SK-N-SH (cell line): ENCODE measurements at regions of chr11 and their contacts with region 1.

Region 1: GRCh38 chr11:120303004-120303637 is 22.0 kb upstream of the TLCD5 start:
- DNase-seq: peak; percentile 62
- H3K4me3 ChIP-seq: peak overlapping the region in 1 of 2 experiments; percentile 47; a peak in 1 of 4 replicates
- H3K27ac ChIP-seq: no peak overlapping the region
- H3K4me1 ChIP-seq: peaks cover 6 to 7% of the 10 kb centered on the region in 2 experiments; a peak in 1 of 4 replicates
- H3K27me3 ChIP-seq: peaks cover 3% of the 10 kb centered on the region; the same call in 1 of the 2 replicates
- CTCF ChIP-seq: peak; percentile 71
- EP300 ChIP-seq: no peak
- RAD21 ChIP-seq: peak; percentile 70

Region 2: GRCh38 chr11:120182790-120183491 is 120.2 kb before region 1 on chr11:
- CTCF ChIA-PET with region 1: interaction called, 33 read pairs
- POLR2A ChIA-PET with region 1: no interaction called
- DNase-seq: no peak
- H3K4me3 ChIP-seq: no peak overlapping the region
- H3K27ac ChIP-seq: no peak overlapping the region
- H3K4me1 ChIP-seq: peaks cover 5 to 51% of the 10 kb centered on the region in 2 experiments; a peak in 2 of 4 replicates
- H3K27me3 ChIP-seq: no peaks in the 10 kb centered on the region
- CTCF ChIP-seq: peak; percentile 42
- EP300 ChIP-seq: no peak
- RAD21 ChIP-seq: peak; percentile 42

Region 3: GRCh38 chr11:120235024-120235861 is 67.9 kb before region 1 on chr11:
- CTCF ChIA-PET with region 1: interaction called, 622 read pairs
- POLR2A ChIA-PET with region 1: interaction called, 6 read pairs
- DNase-seq: peak; percentile 78
- H3K4me3 ChIP-seq: no peak overlapping the region; a peak in 1 of 4 replicates
- H3K27ac ChIP-seq: no peak overlapping the region
- H3K4me1 ChIP-seq: peaks cover 0 to 5% of the 10 kb centered on the region in 2 experiments; a peak in 1 of 4 replicates
- H3K27me3 ChIP-seq: peaks cover 7% of the 10 kb centered on the region; the same call in 1 of the 2 replicates
- CTCF ChIP-seq: peak; percentile 73
- EP300 ChIP-seq: no peak
- RAD21 ChIP-seq: peak; percentile 84

Region 4: DNA sequence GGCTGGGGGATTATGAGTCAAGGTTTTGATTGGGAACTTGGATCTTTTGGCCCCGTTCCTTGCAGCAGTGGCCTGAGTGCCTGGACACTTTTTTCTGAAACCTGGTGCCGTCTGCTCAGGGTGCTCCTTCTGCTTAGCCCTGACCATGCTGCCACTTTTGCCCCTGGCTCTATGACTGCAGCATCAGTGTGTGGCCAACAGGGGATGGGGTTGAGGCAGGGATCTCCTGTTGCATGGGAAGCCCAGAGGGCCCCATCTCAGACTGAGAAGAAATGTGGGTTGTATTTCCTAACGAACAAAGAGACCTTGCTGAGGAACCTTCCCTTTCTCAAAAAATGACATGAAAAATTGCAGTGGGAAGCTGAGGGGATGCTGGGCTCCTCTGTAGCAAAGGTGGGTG is 44.5 kb before region 1 on chr11:
- CTCF ChIA-PET with region 1: interaction called, 143 read pairs
- POLR2A ChIA-PET with region 1: no interaction called
- DNase-seq: no peak
- H3K4me3 ChIP-seq: no peak overlapping the region
- H3K27ac ChIP-seq: no peak overlapping the region
- H3K4me1 ChIP-seq: no peaks in the 10 kb centered on the region; a peak in 1 of 4 replicates
- H3K27me3 ChIP-seq: peaks cover 26% of the 10 kb centered on the region; the same call in 1 of the 2 replicates
- CTCF ChIP-seq: no peak
- EP300 ChIP-seq: no peak
- RAD21 ChIP-seq: no peak

Region 5: DNA sequence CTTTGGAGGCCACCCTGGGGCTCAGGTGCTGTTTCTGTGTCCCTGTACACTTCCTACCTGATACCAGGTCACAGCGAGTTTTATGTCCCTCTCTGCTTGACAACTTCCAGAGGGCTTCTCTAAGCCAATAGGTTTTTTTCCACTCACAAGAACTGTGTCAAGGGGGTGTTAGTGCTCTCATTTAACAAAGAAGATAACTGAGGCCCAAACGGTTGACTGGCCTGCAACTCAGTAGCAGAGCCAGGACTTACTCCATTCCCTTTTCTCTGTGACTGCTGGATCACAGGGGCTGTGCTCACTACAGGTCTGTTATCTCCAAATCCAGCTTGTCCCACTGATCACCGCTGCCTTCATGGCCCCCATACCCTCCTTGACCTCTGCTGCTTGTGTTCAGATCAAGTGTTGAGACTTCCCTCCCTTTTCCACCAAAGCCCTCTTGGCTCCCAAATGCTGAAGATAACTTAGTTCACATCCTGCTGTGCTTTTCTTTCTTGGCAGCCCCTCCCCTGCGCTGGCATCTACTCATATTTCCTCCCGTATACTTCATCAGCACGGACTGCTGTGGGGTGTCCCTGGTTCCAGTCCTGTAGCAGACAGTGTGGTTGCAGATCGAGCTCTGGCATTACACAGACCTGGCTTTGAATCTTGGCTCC is 21.9 kb before region 1 on chr11:
- CTCF ChIA-PET with region 1: interaction called, 41 read pairs
- POLR2A ChIA-PET with region 1: no interaction called
- DNase-seq: no peak
- H3K4me3 ChIP-seq: no peak overlapping the region
- H3K27ac ChIP-seq: 0 out of 4 replicates have a peak overlapping the region, but pooled peaks of 1 of the 2 experiments have one; percentile 14
- H3K4me1 ChIP-seq: peaks cover 0 to 39% of the 10 kb centered on the region in 2 experiments; a peak in 2 of 4 replicates
- H3K27me3 ChIP-seq: no peaks in the 10 kb centered on the region
- CTCF ChIP-seq: no peak
- EP300 ChIP-seq: no peak
- RAD21 ChIP-seq: no peak

Region 6: GRCh38 chr11:120324932-120325810 is 22.1 kb after region 1 on chr11 and contains the start of gene TLCD5:
- CTCF ChIA-PET with region 1: interaction called, 11 read pairs
- POLR2A ChIA-PET with region 1: no interaction called
- DNase-seq: peak; percentile 93
- H3K4me3 ChIP-seq: peak within 1 kb of the TSS; percentile 78 to 83
- H3K27ac ChIP-seq: peak within 1 kb of the TSS; percentile 85 to 88
- H3K4me1 ChIP-seq: peaks cover 9 to 21% of the 10 kb centered on the region in 2 experiments
- H3K27me3 ChIP-seq: no peaks in the 10 kb centered on the region
- CTCF ChIP-seq: peak; percentile 34
- EP300 ChIP-seq: peak in 1 of 2 experiments; percentile 17; a peak in 1 of 4 replicates
- RAD21 ChIP-seq: no peak
- polyA plus RNA-seq, gene TLCD5: 12.7 and 18.7 TPM in 2 replicates

Region 7: DNA sequence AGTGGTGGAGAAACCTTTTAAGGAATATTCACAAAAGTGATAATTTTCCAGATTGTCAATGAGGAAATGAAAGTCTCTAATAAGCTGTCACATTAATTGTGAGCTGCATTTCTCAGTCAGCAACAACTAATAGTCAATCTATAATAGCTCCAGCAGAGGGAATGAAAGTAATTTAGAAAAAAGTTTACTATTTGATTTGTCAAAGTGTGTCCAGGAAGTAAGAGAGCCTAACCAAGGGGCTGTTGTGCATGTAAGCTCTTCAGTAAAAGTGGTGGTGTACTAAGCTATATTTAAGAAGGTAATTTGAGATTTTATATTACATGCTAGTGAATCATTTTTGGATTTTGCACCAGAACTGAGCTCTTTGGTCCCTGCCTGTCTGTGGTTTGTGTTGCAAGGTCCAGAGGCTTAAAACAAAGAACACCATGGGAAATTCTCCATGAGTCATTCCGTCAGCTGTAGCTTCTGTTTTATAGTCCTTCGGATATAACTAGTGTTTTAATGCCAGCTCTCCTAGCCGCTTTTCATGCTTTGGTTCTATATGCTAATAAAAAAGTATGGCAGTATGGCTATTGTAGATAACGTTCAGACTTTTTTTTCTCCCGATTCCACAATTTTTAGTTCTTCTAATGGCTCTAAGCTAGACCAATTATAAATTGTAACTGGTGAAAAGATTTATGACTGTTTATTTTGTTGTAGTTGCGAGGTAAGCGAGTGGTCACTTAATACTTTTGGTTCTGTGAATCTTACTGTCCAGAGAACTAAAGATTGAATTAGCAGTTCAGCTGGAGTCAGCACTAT is 97.6 kb after region 1 on chr11:
- CTCF ChIA-PET with region 1: no interaction called
- POLR2A ChIA-PET with region 1: no interaction called
- DNase-seq: no peak
- H3K4me3 ChIP-seq: peak overlapping the region; percentile 14 to 27; a peak in 2 of 4 replicates
- H3K27ac ChIP-seq: peak overlapping the region; percentile 50 to 74; a peak in 3 of 4 replicates
- H3K4me1 ChIP-seq: peaks cover 2 to 28% of the 10 kb centered on the region in 2 experiments; a peak in 2 of 4 replicates
- H3K27me3 ChIP-seq: no peaks in the 10 kb centered on the region
- CTCF ChIP-seq: no peak
- EP300 ChIP-seq: peak; percentile 12 to 66; a peak in 1 of 4 replicates
- RAD21 ChIP-seq: no peak

Region 8: DNA sequence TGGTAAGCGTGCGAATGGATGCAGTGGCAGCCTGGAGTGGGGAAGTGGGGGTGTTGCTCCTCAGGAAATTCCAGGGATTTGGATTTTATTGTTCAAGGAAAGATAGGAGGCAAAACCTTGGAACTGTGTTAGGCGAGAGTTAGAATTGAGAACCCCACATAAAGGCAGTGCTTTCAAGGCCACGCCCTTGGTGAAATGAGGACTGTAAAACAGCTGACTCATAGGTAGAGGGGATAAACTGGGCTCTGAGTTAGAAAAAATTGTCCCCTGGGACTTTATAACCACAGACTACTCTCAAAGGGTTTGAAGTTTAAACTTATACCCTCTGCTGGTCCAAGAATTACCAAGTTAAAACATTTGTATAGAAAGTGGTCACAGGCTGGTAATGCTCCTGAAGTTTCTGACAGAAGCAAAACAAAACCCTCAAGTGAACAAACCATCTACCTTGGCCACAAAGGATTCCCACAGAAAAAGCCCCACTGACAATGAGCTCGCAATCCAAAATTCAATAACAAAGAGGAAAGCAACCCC is 470.4 kb after region 1 on chr11:
- CTCF ChIA-PET with region 1: no interaction called
- POLR2A ChIA-PET with region 1: no interaction called
- DNase-seq: no peak
- H3K4me3 ChIP-seq: no peak overlapping the region
- H3K27ac ChIP-seq: no peak overlapping the region
- H3K4me1 ChIP-seq: peaks cover 0 to 10% of the 10 kb centered on the region in 2 experiments; a peak in 2 of 4 replicates
- H3K27me3 ChIP-seq: no peaks in the 10 kb centered on the region
- CTCF ChIP-seq: no peak
- EP300 ChIP-seq: no peak
- RAD21 ChIP-seq: no peak